ENCODE measurements at regions of chr9 and their contacts with region 1.

Region 1: DNA sequence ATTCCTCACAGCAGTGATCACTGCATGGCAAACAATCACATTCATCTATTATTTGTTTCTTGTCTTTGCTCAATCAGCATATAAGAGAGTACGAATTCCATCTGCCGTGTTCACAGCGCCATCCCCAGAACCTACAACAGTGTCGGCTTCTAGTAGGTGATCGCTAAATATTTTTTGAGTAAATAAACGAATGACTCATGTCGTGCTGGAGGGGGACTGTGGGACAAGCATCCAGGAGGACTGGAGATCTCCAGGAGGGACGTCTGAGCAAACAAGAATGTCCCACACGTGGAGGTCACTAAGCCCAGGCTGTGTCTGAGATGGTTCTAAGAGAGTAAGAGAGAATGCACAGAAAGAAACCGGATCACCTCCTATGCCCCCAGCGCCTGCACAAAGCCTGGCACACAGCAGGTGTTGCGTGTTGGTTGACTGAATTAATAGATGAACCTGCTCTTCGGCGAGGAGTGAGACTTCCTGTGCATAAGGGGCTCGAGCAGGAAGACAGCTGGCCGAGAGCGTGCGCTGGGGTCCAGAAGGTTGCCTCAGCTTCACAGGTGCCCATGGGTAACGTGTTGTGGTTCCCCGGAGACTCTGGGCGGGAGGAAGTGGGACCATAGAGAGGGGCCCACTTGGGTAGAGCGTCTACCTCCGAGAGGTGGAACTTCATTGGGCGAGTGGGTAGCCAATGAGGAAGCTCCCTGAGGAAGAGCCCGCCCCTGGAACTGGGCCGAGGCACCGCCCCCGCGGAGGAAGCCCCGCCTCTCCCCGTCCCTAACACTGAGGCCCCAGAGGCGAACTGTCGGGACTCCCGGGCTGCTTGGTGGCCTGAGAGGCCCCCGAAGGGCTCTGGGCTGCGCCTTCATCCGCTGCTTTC is 193.0 kb downstream of the MELK start:
- DNase-seq: peak; percentile 89
- ATAC-seq: peak; percentile 98
- H3K4me3 Mint-ChIP-seq: no peak overlapping the region
- H3K27ac Mint-ChIP-seq: no peak overlapping the region
- H3K4me1 Mint-ChIP-seq: no peaks in the 10 kb centered on the region
- H3K27me3 Mint-ChIP-seq: peaks cover 17% of the 10 kb centered on the region
- CTCF ChIP-seq: no peak

Region 2: GRCh38 chr9:36258208-36258988 is 507.3 kb before region 1 on chr9 and contains the start of gene GNE:
- CTCF ChIA-PET with region 1: no interaction called
- POLR2A ChIA-PET with region 1: no interaction called
- intact Hi-C with region 1: loop called (anchors 1 kb)
- DNase-seq: peak; percentile 97
- ATAC-seq: peak; percentile 80
- H3K4me3 Mint-ChIP-seq: peak within 1 kb of the TSS; percentile 95
- H3K27ac Mint-ChIP-seq: peak within 1 kb of the TSS; percentile 92
- H3K4me1 Mint-ChIP-seq: peaks cover 16% of the 10 kb centered on the region
- H3K27me3 Mint-ChIP-seq: no peaks in the 10 kb centered on the region
- CTCF ChIP-seq: no peak
- total RNA-seq, gene GNE: 18.1 and 19.3 TPM in 2 replicates

Region 3: DNA sequence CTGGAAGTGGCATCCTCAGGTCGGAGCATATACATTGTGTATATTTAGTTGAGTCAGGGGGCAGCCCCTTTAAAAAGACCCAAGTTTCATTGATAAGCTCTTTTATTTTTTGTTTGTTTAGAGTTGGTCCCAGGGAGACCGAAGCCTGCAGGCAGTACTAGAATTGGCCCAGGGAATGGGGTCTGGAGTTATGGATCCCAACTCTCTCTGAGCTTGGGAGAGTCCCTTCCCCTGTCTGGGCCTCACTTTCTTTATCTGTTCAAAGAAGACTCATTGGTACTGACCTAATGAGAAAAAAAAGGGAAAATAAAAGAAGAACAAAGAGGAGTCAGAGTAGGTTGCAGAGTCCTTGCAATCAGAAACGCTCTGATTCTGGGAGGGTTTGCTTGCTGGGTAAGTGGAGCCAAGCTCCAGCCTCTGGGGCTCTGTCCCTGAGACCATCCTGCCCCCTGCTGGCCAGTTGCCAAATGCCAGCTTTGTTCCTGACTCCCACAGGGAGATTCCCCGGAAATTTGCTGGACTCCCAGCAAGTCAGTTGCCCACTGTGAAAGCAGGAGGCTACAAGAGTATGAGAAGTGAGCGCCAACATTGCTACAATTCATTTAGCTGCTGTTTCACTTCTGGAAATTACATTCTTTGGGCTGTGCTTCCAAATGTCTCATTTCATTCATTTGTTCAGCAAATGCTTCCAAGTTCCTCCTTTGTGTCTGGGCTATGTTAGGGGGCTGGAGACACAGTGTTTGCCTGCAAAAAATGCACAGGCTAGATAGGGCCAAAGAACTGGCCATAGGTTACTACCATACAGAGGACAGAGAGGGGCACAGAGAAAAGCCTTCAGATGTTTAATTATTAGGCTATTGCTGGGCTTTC is 36.8 kb before region 1 on chr9:
- CTCF ChIA-PET with region 1: no interaction called
- POLR2A ChIA-PET with region 1: interaction called, 9 read pairs
- intact Hi-C with region 1: loop called (anchors 1 kb)
- DNase-seq: peak; percentile 55
- ATAC-seq: peak; percentile 70
- H3K4me3 Mint-ChIP-seq: no peak overlapping the region
- H3K27ac Mint-ChIP-seq: peak overlapping the region; percentile 27
- H3K4me1 Mint-ChIP-seq: peaks cover 14% of the 10 kb centered on the region
- H3K27me3 Mint-ChIP-seq: no peaks in the 10 kb centered on the region
- CTCF ChIP-seq: peak; percentile 93

Region 4: DNA sequence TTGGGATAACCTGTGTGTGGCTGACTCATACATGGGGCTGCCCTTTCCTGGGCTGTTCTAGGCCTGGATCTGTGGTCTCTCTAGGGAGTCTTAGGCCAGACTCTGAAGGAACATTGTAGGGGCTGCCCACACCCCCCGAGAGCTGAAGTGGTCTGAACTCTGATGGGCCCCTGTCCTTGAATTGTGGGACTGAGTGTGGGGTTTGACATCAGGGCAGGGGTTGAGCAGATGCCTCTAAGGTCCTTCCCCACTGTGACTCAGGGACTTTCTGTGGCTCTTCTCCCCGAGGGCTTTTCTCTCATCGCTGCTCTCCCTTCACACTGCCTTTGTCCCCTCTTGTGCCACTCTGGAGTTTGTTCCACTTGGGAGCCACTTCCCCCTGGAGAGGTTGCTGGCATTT is 22.0 kb after region 1 on chr9:
- CTCF ChIA-PET with region 1: no interaction called
- POLR2A ChIA-PET with region 1: no interaction called
- intact Hi-C with region 1: loop called (anchors 2 kb)
- DNase-seq: no peak
- ATAC-seq: no peak
- H3K4me3 Mint-ChIP-seq: no peak overlapping the region
- H3K27ac Mint-ChIP-seq: no peak overlapping the region
- H3K4me1 Mint-ChIP-seq: no peaks in the 10 kb centered on the region
- H3K27me3 Mint-ChIP-seq: peaks cover 12% of the 10 kb centered on the region
- CTCF ChIP-seq: no peak

Region 5: DNA sequence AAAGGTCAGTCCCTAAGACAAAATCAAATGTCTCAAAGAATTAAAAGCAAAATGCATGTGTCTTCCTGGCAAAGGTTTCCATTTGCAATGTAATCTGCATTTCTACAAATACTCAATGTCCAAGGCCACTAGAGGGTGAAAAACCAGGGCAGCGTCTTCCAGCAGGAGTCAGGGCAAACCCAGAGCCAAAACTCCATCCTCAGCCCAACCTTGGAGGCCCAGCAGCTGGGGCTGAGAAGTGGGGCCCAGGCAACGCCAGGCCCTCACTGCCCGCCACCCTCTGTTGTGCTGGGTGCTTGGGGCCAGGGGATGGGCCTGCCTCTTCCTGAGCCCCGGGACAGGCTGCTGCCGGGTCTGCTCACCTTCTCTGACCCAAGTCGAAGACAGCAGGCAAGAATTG is 68.2 kb after region 1 on chr9:
- CTCF ChIA-PET with region 1: no interaction called
- POLR2A ChIA-PET with region 1: interaction called, 3 read pairs
- intact Hi-C with region 1: loop called (anchors 5 kb)
- DNase-seq: peak; percentile 13
- ATAC-seq: no peak
- H3K4me3 Mint-ChIP-seq: no peak overlapping the region
- H3K27ac Mint-ChIP-seq: peak overlapping the region; percentile 86
- H3K4me1 Mint-ChIP-seq: peaks cover 67% of the 10 kb centered on the region
- H3K27me3 Mint-ChIP-seq: no peaks in the 10 kb centered on the region
- CTCF ChIP-seq: no peak

Region 6: DNA sequence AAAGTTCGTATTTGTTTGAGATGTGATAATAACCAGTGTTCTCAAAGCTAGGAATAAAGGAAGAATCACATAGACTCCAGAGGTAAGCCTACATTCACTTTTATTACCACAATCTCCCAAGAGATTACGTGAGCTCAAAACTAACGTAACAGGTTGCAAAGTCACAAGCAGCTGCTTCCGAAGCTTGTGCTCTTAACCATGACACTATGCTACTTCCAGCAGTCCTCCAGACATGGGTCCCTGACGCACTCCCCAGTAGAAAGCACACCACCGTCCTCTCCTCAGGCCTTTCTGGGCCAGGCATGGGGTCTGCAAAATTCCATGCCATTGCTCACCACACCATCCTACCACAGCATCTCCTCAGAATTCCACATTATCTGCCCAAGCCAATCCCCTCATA is 183.8 kb after region 1 on chr9:
- CTCF ChIA-PET with region 1: no interaction called
- POLR2A ChIA-PET with region 1: interaction called, 13 read pairs
- intact Hi-C with region 1: no loop called
- DNase-seq: peak; percentile 15
- ATAC-seq: peak; percentile 87
- H3K4me3 Mint-ChIP-seq: peak overlapping the region; percentile 61
- H3K27ac Mint-ChIP-seq: peak overlapping the region; percentile 88
- H3K4me1 Mint-ChIP-seq: peaks cover 81% of the 10 kb centered on the region
- H3K27me3 Mint-ChIP-seq: no peaks in the 10 kb centered on the region
- CTCF ChIP-seq: no peak